Activated CD8-positive, alpha-beta T cell treated with anti-CD3 and anti-CD28 coated beads for 36 hours (primary cell): ENCODE measurements at regions of chr18 and their contacts with region 1.

Region 1: GRCh38 chr18:2994603-2995432 is 18.1 kb downstream of the LPIN2 start:
- DNase-seq: peak; percentile 93
- ATAC-seq: peak; percentile 73
- H3K4me3 Mint-ChIP-seq: peak overlapping the region; percentile 36
- H3K27ac Mint-ChIP-seq: peak overlapping the region; percentile 87
- H3K4me1 Mint-ChIP-seq: peaks cover 84% of the 10 kb centered on the region
- H3K27me3 Mint-ChIP-seq: no peaks in the 10 kb centered on the region
- CTCF ChIP-seq: peak; percentile 76

Region 2: DNA sequence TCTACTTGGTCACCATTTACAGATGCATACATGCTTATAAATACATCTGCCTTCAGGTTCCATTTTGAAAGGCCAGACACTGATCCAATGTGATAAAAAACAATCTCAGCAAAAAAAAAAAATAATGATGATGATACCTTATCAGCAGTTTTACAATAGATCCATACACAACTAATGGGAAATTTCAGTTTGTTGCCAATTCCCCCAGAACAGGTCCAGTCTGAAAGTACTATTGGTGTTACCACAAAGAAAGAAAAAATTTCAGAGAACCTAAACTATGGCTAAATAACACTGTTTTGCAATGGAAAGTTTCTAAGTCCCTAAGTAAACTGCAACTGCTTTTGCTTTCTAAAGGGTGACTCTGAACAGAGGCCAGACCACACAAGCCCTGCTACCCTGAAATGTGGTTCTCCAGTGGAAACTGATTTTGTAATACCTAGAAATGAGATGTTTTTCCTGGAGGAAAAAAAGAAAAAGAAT is 36.0 kb before region 1 on chr18:
- CTCF ChIA-PET with region 1: interaction called, 152 read pairs
- POLR2A ChIA-PET with region 1: interaction called, 25 read pairs
- intact Hi-C with region 1: no loop called
- DNase-seq: peak; percentile 76
- ATAC-seq: peak; percentile 28
- H3K4me3 Mint-ChIP-seq: peak overlapping the region; percentile 65
- H3K27ac Mint-ChIP-seq: peak overlapping the region; percentile 99
- H3K4me1 Mint-ChIP-seq: peaks cover 84% of the 10 kb centered on the region
- H3K27me3 Mint-ChIP-seq: no peaks in the 10 kb centered on the region
- CTCF ChIP-seq: no peak

Region 3: GRCh38 chr18:2978646-2979045 is 16.2 kb before region 1 on chr18:
- CTCF ChIA-PET with region 1: interaction called, 66 read pairs
- POLR2A ChIA-PET with region 1: interaction called, 11 read pairs
- intact Hi-C with region 1: no loop called
- DNase-seq: peak; percentile 54
- ATAC-seq: peak; percentile 9
- H3K4me3 Mint-ChIP-seq: peak overlapping the region; percentile 74
- H3K27ac Mint-ChIP-seq: peak overlapping the region; percentile 89
- H3K4me1 Mint-ChIP-seq: peaks cover 73% of the 10 kb centered on the region
- H3K27me3 Mint-ChIP-seq: no peaks in the 10 kb centered on the region
- CTCF ChIP-seq: no peak

Region 4: DNA sequence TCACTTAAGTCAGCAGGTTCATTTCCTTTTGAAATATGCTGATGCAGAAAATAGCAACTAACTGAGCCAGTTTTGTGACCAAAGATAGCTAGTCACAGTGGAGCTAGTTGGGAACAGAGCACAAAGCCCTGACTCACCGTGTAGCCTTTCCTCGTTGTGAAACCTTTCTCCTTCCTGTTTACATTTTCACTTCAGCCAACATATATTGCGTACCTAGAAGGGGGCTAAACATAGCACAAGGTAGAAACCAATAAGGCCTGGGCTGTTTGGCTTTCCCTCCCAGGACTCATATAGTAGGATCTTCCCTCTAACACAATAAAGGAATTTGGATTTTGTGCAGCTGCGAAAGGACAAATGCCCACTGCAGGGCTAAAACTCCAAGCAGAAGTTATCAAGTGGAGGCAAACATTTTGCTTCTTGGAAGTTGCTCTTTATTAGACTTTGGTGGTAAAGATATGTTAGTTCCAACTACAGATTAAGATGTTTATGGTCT is 42.7 kb after region 1 on chr18:
- CTCF ChIA-PET with region 1: interaction called, 10 read pairs
- POLR2A ChIA-PET with region 1: interaction called, 3 read pairs
- intact Hi-C with region 1: no loop called
- DNase-seq: peak; percentile 46
- ATAC-seq: peak; percentile 95
- H3K4me3 Mint-ChIP-seq: no peak overlapping the region
- H3K27ac Mint-ChIP-seq: no peak overlapping the region
- H3K4me1 Mint-ChIP-seq: peaks cover 19% of the 10 kb centered on the region
- H3K27me3 Mint-ChIP-seq: no peaks in the 10 kb centered on the region
- CTCF ChIP-seq: no peak

Region 5: GRCh38 chr18:3151399-3152264 is 156.8 kb after region 1 on chr18:
- CTCF ChIA-PET with region 1: interaction called, 31 read pairs
- POLR2A ChIA-PET with region 1: interaction called, 3 read pairs
- intact Hi-C with region 1: no loop called
- DNase-seq: no peak
- ATAC-seq: no peak
- H3K4me3 Mint-ChIP-seq: no peak overlapping the region
- H3K27ac Mint-ChIP-seq: no peak overlapping the region
- H3K4me1 Mint-ChIP-seq: peaks cover 2% of the 10 kb centered on the region
- H3K27me3 Mint-ChIP-seq: no peaks in the 10 kb centered on the region
- CTCF ChIP-seq: peak; percentile 82

Region 6: GRCh38 chr18:3269241-3269913 is 274.6 kb after region 1 on chr18:
- CTCF ChIA-PET with region 1: no interaction called
- POLR2A ChIA-PET with region 1: no interaction called
- intact Hi-C with region 1: no loop called
- DNase-seq: no peak
- ATAC-seq: no peak
- H3K4me3 Mint-ChIP-seq: peak overlapping the region; percentile 6
- H3K27ac Mint-ChIP-seq: peak overlapping the region; percentile 77
- H3K4me1 Mint-ChIP-seq: peaks cover 82% of the 10 kb centered on the region
- H3K27me3 Mint-ChIP-seq: no peaks in the 10 kb centered on the region
- CTCF ChIP-seq: no peak